ENCODE measurements at regions of chr11 and their contacts with region 1.

Region 1: GRCh38 chr11:118956094-118956846 is at the start of gene UPK2:
- DNase-seq: peak; percentile 85 to 89
- H3K4me3 ChIP-seq: no peak within 1 kb of the TSS
- H3K27ac ChIP-seq: no peak within 1 kb of the TSS
- H3K4me1 ChIP-seq: no peaks in the 10 kb centered on the region
- H3K27me3 ChIP-seq: no peaks in the 10 kb centered on the region
- CTCF ChIP-seq: peak; percentile 90 to 98 (median 96)
- POLR2A ChIP-seq: peak in 1 of 2 donors; percentile 7
- total RNA-seq, gene UPK2: not detected

Region 2: DNA sequence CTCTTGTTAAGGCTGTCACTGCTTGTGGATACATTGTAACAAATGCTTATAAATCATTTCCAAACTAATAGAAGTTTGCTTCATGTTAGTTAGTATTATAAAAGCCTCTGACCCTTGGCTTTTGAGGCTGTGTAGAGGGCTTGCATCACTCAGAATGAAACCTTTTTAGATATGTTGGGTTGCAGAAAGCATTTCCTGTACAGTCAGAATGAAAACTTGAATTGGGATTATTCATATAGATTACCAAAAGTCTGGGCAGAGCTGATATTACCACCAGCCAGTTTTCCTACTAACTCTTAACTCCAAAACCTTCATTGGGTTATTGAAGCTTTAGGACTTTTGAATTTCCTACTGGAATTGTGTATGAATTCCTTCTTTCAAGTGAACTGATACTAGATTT is 508.0 kb before region 1 on chr11:
- intact Hi-C with region 1: no loop called
- DNase-seq: no peak
- H3K4me3 ChIP-seq: no peak overlapping the region
- H3K27ac ChIP-seq: no peak overlapping the region
- H3K4me1 ChIP-seq: no peaks in the 10 kb centered on the region
- H3K27me3 ChIP-seq: no peaks in the 10 kb centered on the region
- CTCF ChIP-seq: no peak
- POLR2A ChIP-seq: no peak

Region 3: GRCh38 chr11:118610804-118611795 is 345.2 kb before region 1 on chr11:
- intact Hi-C with region 1: no loop called
- DNase-seq: peak; percentile 83 to 85
- H3K4me3 ChIP-seq: peak overlapping the region; percentile 71 to 96
- H3K27ac ChIP-seq: peak overlapping the region; percentile 98 to 99
- H3K4me1 ChIP-seq: peaks cover 0 to 16% of the 10 kb centered on the region in 2 donors
- H3K27me3 ChIP-seq: no peaks in the 10 kb centered on the region
- CTCF ChIP-seq: peak; percentile 83 to 94 (median 90)
- POLR2A ChIP-seq: peak; percentile 11 to 18

Region 4: GRCh38 chr11:118689851-118690552 is 266.3 kb before region 1 on chr11:
- intact Hi-C with region 1: loop called (anchors 5 kb)
- DNase-seq: peak; percentile 77 to 82
- H3K4me3 ChIP-seq: peak overlapping the region; percentile 21 to 29
- H3K27ac ChIP-seq: peak overlapping the region; percentile 61 to 63
- H3K4me1 ChIP-seq: no peaks in the 10 kb centered on the region
- H3K27me3 ChIP-seq: no peaks in the 10 kb centered on the region
- CTCF ChIP-seq: peak; percentile 70 to 84 (median 82)
- POLR2A ChIP-seq: peak in 1 of 2 donors; percentile 28

Region 5: DNA sequence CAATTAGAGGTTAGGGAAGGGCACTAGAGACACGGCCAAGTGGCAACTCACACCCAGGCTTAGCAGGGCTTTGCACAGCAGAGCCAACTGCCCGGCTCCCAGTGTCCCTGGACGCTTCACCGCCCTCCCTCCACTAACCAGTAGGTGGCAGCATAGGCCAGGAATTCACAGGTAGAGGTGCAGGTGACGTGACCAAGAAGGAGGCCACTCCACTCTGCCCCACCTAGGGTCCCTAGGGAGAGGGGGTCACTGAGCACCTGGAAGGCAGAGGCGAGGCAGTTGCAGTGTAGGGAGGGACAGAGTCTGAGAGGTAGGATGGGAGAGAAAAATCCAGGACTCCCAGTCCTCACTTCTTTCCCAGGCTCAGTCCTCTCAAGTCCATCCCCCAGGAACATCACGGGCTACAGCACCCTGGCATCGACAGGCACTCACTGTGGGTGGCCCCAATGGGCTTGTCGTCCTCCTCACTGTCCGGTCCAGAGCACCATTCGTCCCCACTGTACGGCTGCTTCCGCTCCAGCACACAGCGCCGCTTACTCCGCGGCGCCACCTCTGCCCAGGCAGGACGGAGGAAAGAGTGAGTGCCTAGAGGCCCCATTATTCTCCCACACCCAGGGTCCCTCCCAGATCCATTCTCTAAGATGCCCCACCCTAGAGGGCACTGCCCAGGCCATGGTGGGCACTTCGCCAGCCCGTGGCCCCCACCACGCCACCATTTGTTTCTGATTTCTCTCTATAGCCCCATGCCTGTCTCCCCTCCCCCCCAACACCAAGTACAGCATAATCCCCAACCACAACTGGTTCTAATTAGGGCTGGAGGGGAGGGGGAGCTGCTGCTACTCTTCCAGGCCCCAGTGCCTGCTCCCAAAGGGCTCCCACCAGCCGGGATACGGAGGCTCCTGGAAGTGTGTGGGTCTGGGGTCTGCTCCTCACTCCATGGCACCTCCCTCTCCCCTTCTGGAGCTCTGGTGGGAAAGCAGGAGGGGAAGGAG is 48.9 kb before region 1 on chr11:
- intact Hi-C with region 1: loop called (anchors 10 kb)
- DNase-seq: peak; percentile 85 to 87
- H3K4me3 ChIP-seq: no peak overlapping the region
- H3K27ac ChIP-seq: peak overlapping the region; percentile 99 to 100
- H3K4me1 ChIP-seq: peaks cover 4 to 23% of the 10 kb centered on the region in 2 donors
- H3K27me3 ChIP-seq: no peaks in the 10 kb centered on the region
- CTCF ChIP-seq: peak; percentile 87 to 98 (median 96)
- POLR2A ChIP-seq: peak in 1 of 2 donors; percentile 14